ENCODE measurements at regions of chr2 and their contacts with region 1.

Region 1: GRCh38 chr2:84905181-84906107 is at the start of gene TMSB10:
- DNase-seq: peak; percentile 80 to 95 (median 91)
- H3K4me3 ChIP-seq: peak within 1 kb of the TSS; percentile 92
- H3K4me3 Mint-ChIP-seq: peak within 1 kb of the TSS; percentile 91 to 97 (median 96)
- H3K27ac ChIP-seq: peak within 1 kb of the TSS; percentile 73
- H3K27ac Mint-ChIP-seq: peak within 1 kb of the TSS; percentile 91 to 98 (median 94)
- H3K4me1 ChIP-seq: peaks cover 32% of the 10 kb centered on the region
- H3K4me1 Mint-ChIP-seq: peaks cover 51 to 64% (median 62%) of the 10 kb centered on the region in 3 donors
- H3K27me3 ChIP-seq: no peaks in the 10 kb centered on the region
- H3K27me3 Mint-ChIP-seq: peaks cover 0 to 5% of the 10 kb centered on the region in 2 donors
- total RNA-seq, gene TMSB10: 1,121 to 1,125 TPM

Region 2: DNA sequence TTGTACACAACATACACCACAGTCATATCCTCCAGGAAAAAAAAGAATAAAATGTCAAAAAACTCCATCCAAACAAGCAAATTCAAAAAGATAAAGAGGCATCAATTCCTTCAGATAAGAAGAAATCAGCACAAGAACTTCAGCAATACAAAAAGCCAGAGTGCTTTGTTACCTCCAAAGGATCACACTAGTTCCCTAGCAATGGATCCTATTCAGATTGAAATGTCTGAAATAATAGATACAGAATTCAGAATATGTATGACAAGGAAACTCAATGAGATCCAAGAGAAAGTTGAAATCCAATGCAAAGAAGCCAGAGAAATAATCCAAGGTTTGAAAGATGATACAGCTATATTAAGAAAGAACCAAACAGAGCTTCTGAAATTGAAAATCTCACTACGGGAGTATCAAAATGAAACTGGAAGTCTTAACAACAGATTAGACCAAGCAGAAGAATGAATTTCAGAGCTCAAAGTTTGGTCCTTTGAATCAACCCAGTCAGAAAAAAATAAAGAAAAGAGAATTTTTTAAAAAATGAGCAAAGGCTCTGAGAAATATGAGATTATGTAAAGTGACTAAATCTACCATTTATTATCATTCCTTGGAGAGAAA is 105.1 kb before region 1 on chr2:
- CTCF ChIA-PET with region 1: no interaction called
- POLR2A ChIA-PET with region 1: no interaction called
- DNase-seq: no peak
- H3K4me3 ChIP-seq: no peak overlapping the region
- H3K4me3 Mint-ChIP-seq: peak overlapping the region; percentile 5 to 73 (median 57)
- H3K27ac ChIP-seq: no peak overlapping the region
- H3K27ac Mint-ChIP-seq: peak overlapping the region in 7 of 8 donors; percentile 11 to 83 (median 64)
- H3K4me1 ChIP-seq: no peaks in the 10 kb centered on the region
- H3K4me1 Mint-ChIP-seq: peaks cover 14 to 36% (median 35%) of the 10 kb centered on the region in 3 donors
- H3K27me3 ChIP-seq: no peaks in the 10 kb centered on the region
- H3K27me3 Mint-ChIP-seq: no peaks in the 10 kb centered on the region

Region 3: GRCh38 chr2:84888401-84889276 is 16.8 kb before region 1 on chr2:
- CTCF ChIA-PET with region 1: interaction called, 59 read pairs
- POLR2A ChIA-PET with region 1: interaction called, 54 read pairs
- DNase-seq: peak in 3 of 5 donors; percentile 54 to 75 (median 69)
- H3K4me3 ChIP-seq: peak overlapping the region; percentile 63
- H3K4me3 Mint-ChIP-seq: peak overlapping the region; percentile 66 to 93 (median 80)
- H3K27ac ChIP-seq: peak overlapping the region; percentile 40
- H3K27ac Mint-ChIP-seq: peak overlapping the region; percentile 87 to 100 (median 96)
- H3K4me1 ChIP-seq: peaks cover 26% of the 10 kb centered on the region
- H3K4me1 Mint-ChIP-seq: peaks cover 23 to 42% (median 32%) of the 10 kb centered on the region in 3 donors
- H3K27me3 ChIP-seq: no peaks in the 10 kb centered on the region
- H3K27me3 Mint-ChIP-seq: no peaks in the 10 kb centered on the region

Region 4: GRCh38 chr2:84919885-84920580 is 14.6 kb after region 1 on chr2:
- CTCF ChIA-PET with region 1: interaction called, 66 read pairs
- POLR2A ChIA-PET with region 1: interaction called, 65 read pairs
- DNase-seq: peak in 1 of 5 donors; percentile 48
- H3K4me3 ChIP-seq: no peak overlapping the region
- H3K4me3 Mint-ChIP-seq: no peak overlapping the region
- H3K27ac ChIP-seq: no peak overlapping the region
- H3K27ac Mint-ChIP-seq: peak overlapping the region in 5 of 8 donors; percentile 18 to 92 (median 51)
- H3K4me1 ChIP-seq: peaks cover 48% of the 10 kb centered on the region
- H3K4me1 Mint-ChIP-seq: peaks cover 23 to 30% (median 30%) of the 10 kb centered on the region in 3 donors
- H3K27me3 ChIP-seq: no peaks in the 10 kb centered on the region
- H3K27me3 Mint-ChIP-seq: no peaks in the 10 kb centered on the region